Activated naive CD4-positive, alpha-beta T cell treated with anti-CD3 and anti-CD28 coated beads for 36 hours (primary cell): ENCODE measurements at regions of chr12 and their contacts with region 1.

Region 1: GRCh38 chr12:89092297-89092696 is 260.0 kb downstream of the DUSP6 start:
- DNase-seq: no peak
- H3K4me3 Mint-ChIP-seq: no peak overlapping the region
- H3K27ac Mint-ChIP-seq: peak overlapping the region; percentile 69
- H3K4me1 Mint-ChIP-seq: peaks cover 8% of the 10 kb centered on the region
- H3K27me3 Mint-ChIP-seq: no peaks in the 10 kb centered on the region

Region 2: GRCh38 chr12:89135976-89136634 is 43.8 kb after region 1 on chr12:
- CTCF ChIA-PET with region 1: no interaction called
- intact Hi-C with region 1: loop called (anchors 1 kb)
- DNase-seq: peak; percentile 9
- H3K4me3 Mint-ChIP-seq: no peak overlapping the region
- H3K27ac Mint-ChIP-seq: no peak overlapping the region
- H3K4me1 Mint-ChIP-seq: peaks cover 22% of the 10 kb centered on the region
- H3K27me3 Mint-ChIP-seq: no peaks in the 10 kb centered on the region